ENCODE measurements at regions of chr6 and their contacts with region 1.

Region 1: DNA sequence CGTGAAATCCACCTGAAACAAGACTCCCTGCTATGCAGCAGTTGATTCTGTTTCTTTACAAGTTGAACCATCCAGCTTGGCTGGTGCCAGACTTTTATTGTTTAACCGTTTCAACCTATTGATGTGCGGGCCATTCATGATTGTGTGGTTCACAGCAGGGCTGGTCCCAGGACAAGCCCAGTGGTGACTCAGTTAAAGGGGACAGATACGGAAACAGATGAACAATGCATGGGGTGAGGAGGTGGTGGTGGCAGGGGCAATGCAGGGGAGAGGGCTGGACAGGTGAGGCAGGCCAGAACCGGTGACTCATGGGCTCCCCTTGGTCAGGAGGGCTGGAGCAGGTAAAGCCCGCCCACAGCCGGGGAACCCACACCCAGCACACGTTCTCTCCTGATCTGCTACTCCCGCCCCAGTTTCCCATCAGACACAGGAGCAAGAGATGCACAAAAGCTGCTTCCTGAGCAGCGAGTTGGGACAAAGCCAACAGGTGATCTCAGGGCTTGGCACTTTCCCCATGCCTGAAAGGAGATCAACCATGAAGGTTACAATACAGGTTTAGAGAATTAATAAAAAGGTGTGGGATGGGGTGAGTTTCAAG is 232.2 kb downstream of the LY86 start:
- DNase-seq: peak; percentile 96 to 97
- H3K4me3 ChIP-seq: no peak overlapping the region
- H3K27ac ChIP-seq: peak overlapping the region; percentile 94
- H3K4me1 ChIP-seq: peaks cover 69% of the 10 kb centered on the region
- H3K27me3 ChIP-seq: no peaks in the 10 kb centered on the region
- CTCF ChIP-seq: no peak

Region 2: DNA sequence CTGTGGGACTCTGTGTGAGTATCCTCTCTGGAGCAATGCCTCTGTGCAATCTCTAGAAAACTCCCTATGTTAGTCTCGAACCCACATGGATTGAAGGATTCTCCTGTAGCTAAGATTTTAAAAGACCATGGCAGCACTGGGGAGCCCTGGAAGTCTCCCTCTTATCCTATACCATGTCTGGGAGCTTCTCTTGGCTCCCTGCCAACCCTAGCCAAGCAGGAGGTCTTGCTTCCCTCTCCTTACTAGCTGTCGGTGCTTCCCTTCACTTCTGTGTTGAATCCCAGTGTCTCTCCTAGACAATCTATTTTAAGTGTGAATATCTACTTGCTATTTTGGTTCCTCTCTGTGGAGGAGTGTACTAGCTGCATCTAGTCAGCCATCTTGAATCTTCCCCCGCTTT is 695.2 kb before region 1 on chr6:
- CTCF ChIA-PET with region 1: no interaction called
- POLR2A ChIA-PET with region 1: no interaction called
- intact Hi-C with region 1: no loop called
- DNase-seq: no peak
- H3K4me3 ChIP-seq: no peak overlapping the region
- H3K27ac ChIP-seq: no peak overlapping the region
- H3K4me1 ChIP-seq: no peaks in the 10 kb centered on the region
- H3K27me3 ChIP-seq: no peaks in the 10 kb centered on the region
- CTCF ChIP-seq: no peak

Region 3: DNA sequence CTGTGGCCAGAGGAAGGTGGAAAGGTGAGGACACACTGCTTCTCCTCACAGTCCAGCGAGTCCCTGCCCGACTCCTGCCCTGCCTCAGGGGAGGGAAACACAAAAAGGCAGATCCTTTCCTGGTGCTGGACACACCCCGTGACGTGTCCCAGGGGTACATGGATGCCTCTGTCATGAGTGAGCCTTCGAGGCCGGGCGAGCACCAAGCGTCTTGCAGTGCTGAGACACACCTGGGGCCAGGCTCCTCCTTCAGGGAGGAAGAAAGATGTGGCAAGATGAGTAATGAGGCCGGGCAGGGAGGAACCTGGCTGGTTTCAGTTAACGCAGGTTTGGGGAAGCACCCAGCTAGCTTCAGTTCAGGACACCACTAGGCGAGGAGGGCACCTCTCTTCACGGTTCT is 17.2 kb before region 1 on chr6:
- CTCF ChIA-PET with region 1: interaction called, 3 read pairs
- POLR2A ChIA-PET with region 1: no interaction called
- intact Hi-C with region 1: loop called (anchors 1 kb)
- DNase-seq: peak; percentile 94 to 97
- H3K4me3 ChIP-seq: no peak overlapping the region
- H3K27ac ChIP-seq: peak overlapping the region; percentile 98
- H3K4me1 ChIP-seq: peaks cover 29% of the 10 kb centered on the region
- H3K27me3 ChIP-seq: no peaks in the 10 kb centered on the region
- CTCF ChIP-seq: no peak

Region 4: DNA sequence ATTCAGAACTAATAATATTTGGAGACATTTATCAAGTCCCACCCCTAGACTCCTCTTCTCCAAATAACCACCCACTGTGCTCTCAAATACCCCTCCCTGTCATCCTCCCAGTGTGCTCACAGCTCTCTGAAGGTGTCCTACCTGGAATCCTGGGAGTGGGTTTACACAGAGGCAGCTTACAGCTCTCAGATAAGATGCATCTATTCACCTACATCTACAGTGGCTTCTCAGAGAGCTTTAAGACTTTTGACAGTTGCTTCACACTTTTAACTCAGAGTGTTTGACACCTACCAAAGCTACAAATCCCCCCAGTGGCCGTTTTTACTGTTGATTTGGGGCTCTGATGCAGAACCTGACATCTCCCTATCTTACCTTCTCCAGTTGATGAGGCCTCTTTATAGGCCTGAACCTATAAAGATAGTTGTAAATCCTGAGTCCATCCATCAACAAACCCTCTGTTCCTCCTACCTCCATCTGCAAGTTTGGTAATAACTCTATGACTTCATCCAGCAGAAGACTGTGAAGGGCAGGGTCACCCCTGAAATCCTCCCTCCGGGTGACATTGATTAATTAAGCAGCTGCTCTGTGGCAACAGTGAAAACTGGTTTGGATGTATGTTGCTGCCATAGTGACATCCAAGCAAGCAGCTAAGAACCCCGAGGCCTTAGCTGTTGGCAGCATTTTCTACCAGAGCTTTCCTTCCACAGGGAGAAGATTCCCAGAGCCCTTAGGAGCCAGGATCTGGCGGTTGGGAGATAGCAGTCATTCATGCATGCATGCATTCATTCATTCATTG is 60.9 kb after region 1 on chr6:
- CTCF ChIA-PET with region 1: no interaction called
- POLR2A ChIA-PET with region 1: no interaction called
- intact Hi-C with region 1: loop called (anchors 2 kb)
- DNase-seq: peak; percentile 43 to 88
- H3K4me3 ChIP-seq: no peak overlapping the region
- H3K27ac ChIP-seq: peak overlapping the region; percentile 55
- H3K4me1 ChIP-seq: peaks cover 37% of the 10 kb centered on the region
- H3K27me3 ChIP-seq: no peaks in the 10 kb centered on the region
- CTCF ChIP-seq: no peak

Region 5: GRCh38 chr6:7107578-7108195 is 286.9 kb after region 1 on chr6 and contains the start of gene RREB1:
- CTCF ChIA-PET with region 1: no interaction called
- POLR2A ChIA-PET with region 1: no interaction called
- intact Hi-C with region 1: loop called (anchors 1 kb)
- DNase-seq: peak in 1 of 2 experiments; percentile 40
- H3K4me3 ChIP-seq: peak within 1 kb of the TSS; percentile 90
- H3K27ac ChIP-seq: peak within 1 kb of the TSS; percentile 69
- H3K4me1 ChIP-seq: peaks cover 29% of the 10 kb centered on the region
- H3K27me3 ChIP-seq: no peaks in the 10 kb centered on the region
- CTCF ChIP-seq: no peak
- total RNA-seq, gene RREB1: 29.2 and 38.4 TPM in 2 replicates